B cell (primary cell): ENCODE measurements at regions of chr19 and their contacts with region 1.

Region 1: GRCh38 chr19:4976401-4977298 is 7.7 kb downstream of the KDM4B start:
- DNase-seq: peak; percentile 52
- ATAC-seq: peak; percentile 19
- H3K4me3 ChIP-seq: no peak overlapping the region
- H3K4me3 Mint-ChIP-seq: peak overlapping the region; percentile 81
- H3K27ac ChIP-seq: no peak overlapping the region
- H3K27ac Mint-ChIP-seq: peak overlapping the region; percentile 83
- H3K4me1 ChIP-seq: peaks cover 33 to 47% of the 10 kb centered on the region in 2 donors
- H3K4me1 Mint-ChIP-seq: peaks cover 55% of the 10 kb centered on the region
- H3K27me3 ChIP-seq: no peaks in the 10 kb centered on the region
- H3K27me3 Mint-ChIP-seq: no peaks in the 10 kb centered on the region
- CTCF ChIP-seq: peak; percentile 41

Region 2: DNA sequence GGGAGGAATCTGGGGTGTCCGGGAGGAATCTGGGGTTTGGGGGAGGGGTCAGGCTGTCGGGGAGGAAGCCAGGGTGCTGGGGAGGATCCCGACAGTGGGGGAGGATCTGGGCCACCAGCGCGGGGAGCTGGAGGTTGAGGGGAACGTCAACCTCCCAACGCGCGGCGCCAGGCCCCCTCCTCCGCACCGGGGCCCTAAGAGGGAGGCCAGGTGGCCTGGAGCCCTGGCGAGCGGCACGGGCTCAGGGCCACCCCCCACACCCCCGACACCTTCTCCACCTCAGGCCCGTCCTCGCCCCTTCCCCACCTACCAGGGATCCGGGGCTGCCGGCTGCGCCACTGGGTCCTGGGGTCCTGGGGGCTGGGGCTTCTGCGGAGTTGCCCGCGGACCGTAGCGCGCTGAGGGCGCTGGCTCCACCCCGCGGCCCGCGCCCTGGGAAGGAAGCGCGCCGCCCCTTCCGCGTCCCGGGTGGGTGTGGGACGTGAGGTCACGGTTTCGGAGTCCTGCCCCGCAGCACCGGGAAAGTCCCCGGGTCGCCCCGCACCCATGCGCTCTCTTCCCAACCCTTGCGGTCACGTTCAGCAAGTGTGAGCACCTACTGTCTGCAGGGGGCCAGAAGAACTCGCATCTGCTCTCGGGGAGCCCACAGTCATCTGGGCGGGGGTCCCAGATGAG is 145.2 kb before region 1 on chr19 and contains the start of gene TICAM1:
- CTCF ChIA-PET with region 1: no interaction called
- POLR2A ChIA-PET with region 1: no interaction called
- intact Hi-C with region 1: no loop called
- DNase-seq: peak; percentile 91
- ATAC-seq: peak; percentile 80
- H3K4me3 ChIP-seq: peak within 1 kb of the TSS; percentile 84 to 96 (median 89)
- H3K4me3 Mint-ChIP-seq: peak within 1 kb of the TSS; percentile 93
- H3K27ac ChIP-seq: peak within 1 kb of the TSS; percentile 91 to 92
- H3K27ac Mint-ChIP-seq: peak within 1 kb of the TSS; percentile 93
- H3K4me1 ChIP-seq: peaks cover 17 to 41% of the 10 kb centered on the region in 2 donors
- H3K4me1 Mint-ChIP-seq: peaks cover 30% of the 10 kb centered on the region
- H3K27me3 ChIP-seq: no peaks in the 10 kb centered on the region
- H3K27me3 Mint-ChIP-seq: no peaks in the 10 kb centered on the region
- CTCF ChIP-seq: no peak
- total RNA-seq, gene TICAM1: 18.1 and 19.7 TPM in 2 replicates

Region 3: DNA sequence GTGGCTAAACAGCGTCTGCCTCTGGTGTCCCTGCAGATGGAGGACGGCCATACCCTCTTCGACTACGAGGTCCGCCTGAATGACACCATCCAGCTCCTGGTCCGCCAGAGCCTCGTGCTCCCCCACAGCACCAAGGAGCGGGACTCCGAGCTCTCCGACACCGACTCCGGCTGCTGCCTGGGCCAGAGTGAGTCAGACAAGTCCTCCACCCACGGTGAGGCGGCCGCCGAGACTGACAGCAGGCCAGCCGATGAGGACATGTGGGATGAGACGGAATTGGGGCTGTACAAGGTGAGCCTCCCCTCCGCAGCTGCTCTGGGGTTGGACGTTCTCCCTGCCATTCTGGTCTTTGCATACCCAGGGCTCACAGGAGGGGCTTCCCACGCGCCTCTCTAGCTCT is 47.5 kb before region 1 on chr19:
- CTCF ChIA-PET with region 1: no interaction called
- POLR2A ChIA-PET with region 1: no interaction called
- intact Hi-C with region 1: loop called (anchors 5 kb)
- DNase-seq: no peak
- ATAC-seq: no peak
- H3K4me3 ChIP-seq: no peak overlapping the region
- H3K4me3 Mint-ChIP-seq: no peak overlapping the region
- H3K27ac ChIP-seq: no peak overlapping the region
- H3K27ac Mint-ChIP-seq: no peak overlapping the region
- H3K4me1 ChIP-seq: no peaks in the 10 kb centered on the region
- H3K4me1 Mint-ChIP-seq: peaks cover 7% of the 10 kb centered on the region
- H3K27me3 ChIP-seq: no peaks in the 10 kb centered on the region
- H3K27me3 Mint-ChIP-seq: no peaks in the 10 kb centered on the region
- CTCF ChIP-seq: no peak

Region 4: GRCh38 chr19:4951656-4952055 is 25.0 kb before region 1 on chr19:
- CTCF ChIA-PET with region 1: no interaction called
- POLR2A ChIA-PET with region 1: no interaction called
- intact Hi-C with region 1: no loop called
- DNase-seq: no peak
- ATAC-seq: no peak
- H3K4me3 ChIP-seq: no peak overlapping the region
- H3K4me3 Mint-ChIP-seq: no peak overlapping the region
- H3K27ac ChIP-seq: no peak overlapping the region
- H3K27ac Mint-ChIP-seq: no peak overlapping the region
- H3K4me1 ChIP-seq: no peaks in the 10 kb centered on the region
- H3K4me1 Mint-ChIP-seq: no peaks in the 10 kb centered on the region
- H3K27me3 ChIP-seq: no peaks in the 10 kb centered on the region
- H3K27me3 Mint-ChIP-seq: no peaks in the 10 kb centered on the region
- CTCF ChIP-seq: no peak

Region 5: DNA sequence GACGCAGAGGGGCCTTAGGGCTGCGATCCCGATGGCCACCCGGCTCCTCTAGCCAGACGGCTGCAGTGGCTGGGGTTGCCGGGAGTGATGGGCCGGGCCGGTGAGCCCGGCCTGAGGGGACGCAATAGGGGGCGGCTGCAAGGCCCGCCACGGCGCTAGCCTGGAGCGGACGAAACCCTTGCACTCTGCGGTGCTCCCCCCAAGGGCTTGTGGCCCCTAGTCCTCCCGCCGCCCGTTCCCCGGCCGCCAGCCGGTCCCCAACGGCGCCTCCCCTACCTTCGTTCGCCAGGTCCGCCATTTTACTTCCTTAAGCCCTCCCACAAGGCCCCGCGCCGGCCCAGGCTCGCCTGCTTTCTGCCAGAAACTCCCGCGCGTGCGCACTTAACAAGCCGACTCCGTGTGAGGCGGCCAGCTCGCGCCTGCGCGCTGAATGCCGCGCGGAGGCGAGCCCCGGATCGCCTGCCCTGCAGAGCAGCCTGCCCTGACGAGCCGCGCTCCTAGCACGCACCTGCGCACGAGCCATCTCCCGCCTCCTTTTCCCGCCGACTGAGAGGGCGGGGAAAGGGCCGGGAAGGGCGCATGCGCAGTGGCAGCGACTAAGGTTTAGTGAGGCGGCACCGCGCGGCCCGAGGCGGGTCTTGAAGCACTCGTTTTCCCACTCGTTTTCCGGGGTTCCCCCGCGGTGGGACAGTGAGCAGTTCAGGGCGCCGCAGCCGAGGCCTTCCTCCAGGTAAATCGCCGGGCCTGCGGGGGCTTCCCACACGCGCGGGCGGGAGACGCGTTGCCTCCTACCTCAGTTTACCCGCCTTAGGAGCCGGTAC is 1001.3 kb after region 1 on chr19 and contains the start of gene RANBP3:
- CTCF ChIA-PET with region 1: no interaction called
- POLR2A ChIA-PET with region 1: no interaction called
- intact Hi-C with region 1: loop called (anchors 10 kb)
- DNase-seq: peak; percentile 99
- ATAC-seq: peak; percentile 91
- H3K4me3 ChIP-seq: peak within 1 kb of the TSS; percentile 59 to 93 (median 91)
- H3K4me3 Mint-ChIP-seq: peak within 1 kb of the TSS; percentile 97
- H3K27ac ChIP-seq: peak within 1 kb of the TSS; percentile 59 to 91
- H3K27ac Mint-ChIP-seq: peak within 1 kb of the TSS; percentile 99
- H3K4me1 ChIP-seq: peaks cover 38 to 47% of the 10 kb centered on the region in 2 donors
- H3K4me1 Mint-ChIP-seq: peaks cover 47% of the 10 kb centered on the region
- H3K27me3 ChIP-seq: no peaks in the 10 kb centered on the region
- H3K27me3 Mint-ChIP-seq: no peaks in the 10 kb centered on the region
- CTCF ChIP-seq: no peak
- total RNA-seq, gene RANBP3: 90.0 and 91.7 TPM in 2 replicates